Gastrocnemius medialis (tissue), 4 donors: ENCODE measurements at regions of chr14 and their contacts with region 1.

Region 1: GRCh38 chr14:50396631-50397390 is at the start of gene CDKL1:
- DNase-seq: peak; percentile 9 to 27
- ATAC-seq: peak; percentile 74 to 75
- H3K4me3 ChIP-seq: peak within 1 kb of the TSS; percentile 59 to 95 (median 67)
- H3K27ac ChIP-seq: peak within 1 kb of the TSS; percentile 66 to 70 (median 68)
- H3K4me1 ChIP-seq: peaks cover 10 to 13% of the 10 kb centered on the region in 2 donors
- H3K27me3 ChIP-seq: no peaks in the 10 kb centered on the region
- CTCF ChIP-seq: no peak
- POLR2A ChIP-seq: peak in 1 of 2 donors; percentile 13
- total RNA-seq, gene CDKL1: 0.59 to 2.0 (median 1.4) TPM

Region 2: DNA sequence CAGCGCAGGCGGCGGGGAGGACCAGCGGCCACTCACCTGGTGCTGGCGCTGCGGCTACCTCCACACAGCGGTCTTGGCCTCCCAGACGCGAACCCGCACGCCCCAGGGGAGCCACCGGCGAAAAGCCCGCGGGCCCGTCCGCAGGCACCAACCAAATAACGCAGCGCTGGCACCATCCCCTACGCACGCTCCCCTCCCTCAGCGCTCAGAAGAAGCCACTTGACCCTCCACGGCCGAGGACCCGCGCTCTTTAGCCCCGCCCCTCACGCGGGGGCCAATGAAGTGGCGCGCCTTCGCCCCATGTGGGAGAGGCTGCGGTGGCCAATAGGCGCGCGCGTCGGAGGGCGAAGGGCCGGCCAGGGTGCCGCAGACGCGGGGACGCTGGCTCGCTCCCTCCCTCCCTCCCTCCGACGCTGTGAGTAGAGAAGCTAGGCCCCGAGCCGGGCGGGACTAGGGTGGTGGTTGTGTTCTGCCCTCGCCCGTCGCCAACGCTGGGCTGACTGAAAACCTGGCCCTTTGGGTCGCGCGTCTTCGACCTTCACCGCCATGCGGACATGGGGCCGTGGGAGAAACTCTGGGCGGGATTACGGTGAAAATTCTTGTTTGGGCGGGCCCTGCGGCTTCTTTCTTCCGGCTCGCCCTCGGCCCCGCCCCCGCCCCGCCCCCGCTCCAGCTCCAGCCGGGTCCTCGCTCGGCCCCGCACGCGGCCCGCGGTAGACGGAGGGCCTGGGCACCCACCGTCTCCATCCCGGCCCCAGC is 84.7 kb before region 1 on chr14 and contains the starts of genes DMAC2L and L2HGDH:
- in situ Hi-C with region 1: no loop called
- intact Hi-C with region 1: loop called (anchors 2 kb)
- DNase-seq: peak; percentile 85 to 92
- ATAC-seq: peak; percentile 91 to 95
- H3K4me3 ChIP-seq: peak within 1 kb of the TSS; percentile 61 to 92 (median 86)
- H3K27ac ChIP-seq: peak within 1 kb of the TSS; percentile 94 to 98 (median 96)
- H3K4me1 ChIP-seq: peaks cover 18% of the 10 kb centered on the region in 2 donors
- H3K27me3 ChIP-seq: no peaks in the 10 kb centered on the region
- CTCF ChIP-seq: peak in 3 of 5 experiments; percentile 10 to 78 (median 34)
- POLR2A ChIP-seq: peak; percentile 79 to 83
- total RNA-seq, gene DMAC2L: 18.6 to 42.2 (median 24.6) TPM
- total RNA-seq, gene L2HGDH: 8.6 to 13.4 (median 10.9) TPM

Region 3: DNA sequence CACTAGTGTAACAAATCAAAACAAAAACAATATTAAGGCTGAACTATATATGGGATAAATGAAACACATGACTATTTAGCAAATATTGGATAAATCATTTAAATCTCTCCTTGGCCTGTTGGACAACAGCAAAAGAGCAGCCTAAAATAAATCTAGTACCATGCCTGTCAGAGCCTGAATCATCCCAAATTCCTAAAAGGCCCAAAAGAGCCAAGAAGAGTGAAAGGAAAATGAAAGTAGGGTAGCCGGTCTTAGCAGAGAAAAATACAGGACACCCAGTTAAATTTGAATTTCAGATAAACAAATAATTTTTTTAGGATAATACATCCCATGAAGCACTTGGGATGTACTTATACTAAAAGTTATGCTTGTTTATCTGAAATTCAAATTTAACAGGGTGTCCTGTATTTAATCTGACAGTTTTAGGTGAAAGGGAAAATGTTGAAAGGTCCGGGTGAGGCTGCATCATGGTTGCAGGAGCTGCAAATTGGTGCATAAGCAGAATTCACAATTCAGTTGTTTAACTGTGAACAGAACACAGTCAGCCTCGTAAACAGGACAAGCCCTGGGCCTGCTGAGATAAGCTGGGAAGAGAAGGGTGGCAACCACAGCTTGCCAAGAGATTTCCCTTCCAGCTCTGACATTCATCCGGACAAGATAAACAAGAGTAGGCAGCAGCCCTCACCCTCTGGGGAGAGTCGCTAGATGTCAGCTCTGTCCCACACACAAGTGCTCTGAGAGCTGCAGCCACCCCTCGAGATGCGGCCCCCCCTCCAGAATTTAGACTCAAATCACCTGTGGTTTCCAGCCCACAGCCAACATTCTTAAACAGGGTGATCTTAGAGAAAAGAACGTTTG is 54.4 kb before region 1 on chr14:
- in situ Hi-C with region 1: no loop called
- intact Hi-C with region 1: loop called (anchors 2 kb)
- DNase-seq: peak; percentile 21 to 47
- ATAC-seq: peak; percentile 70 to 78
- H3K4me3 ChIP-seq: peak overlapping the region; percentile 0 to 36 (median 16)
- H3K27ac ChIP-seq: peak overlapping the region; percentile 2 to 63 (median 30)
- H3K4me1 ChIP-seq: peaks cover 8 to 25% of the 10 kb centered on the region in 2 donors
- H3K27me3 ChIP-seq: no peaks in the 10 kb centered on the region
- CTCF ChIP-seq: peak in 2 of 5 experiments; percentile 23 to 38
- POLR2A ChIP-seq: no peak

Region 4: DNA sequence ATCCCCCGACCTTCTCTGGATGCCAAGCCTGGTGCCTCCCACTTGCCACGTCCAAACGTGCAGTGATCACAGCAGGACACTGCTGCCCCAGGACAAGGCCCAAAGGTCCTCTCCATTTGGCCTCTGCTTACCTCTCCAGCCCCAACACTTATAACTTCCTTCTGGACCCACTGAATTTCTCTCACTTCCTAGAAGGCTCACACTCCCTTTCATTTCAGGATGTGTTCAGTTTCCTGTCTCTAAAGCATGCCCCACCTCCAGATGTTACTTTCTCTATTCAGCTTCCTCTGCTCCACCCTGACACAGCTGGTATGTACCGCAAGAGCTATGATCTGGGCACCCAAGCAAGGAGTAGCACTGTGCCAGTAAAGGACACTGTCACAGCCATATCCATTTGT is 33.1 kb before region 1 on chr14:
- in situ Hi-C with region 1: no loop called
- intact Hi-C with region 1: no loop called
- DNase-seq: peak in 1 of 2 donors; percentile 25
- ATAC-seq: peak; percentile 45 to 49
- H3K4me3 ChIP-seq: peak overlapping the region in 2 of 4 donors; percentile 5 to 15
- H3K27ac ChIP-seq: peak overlapping the region in 3 of 4 donors; percentile 12 to 61 (median 43)
- H3K4me1 ChIP-seq: peaks cover 0 to 9% of the 10 kb centered on the region in 2 donors
- H3K27me3 ChIP-seq: no peaks in the 10 kb centered on the region
- CTCF ChIP-seq: no peak
- POLR2A ChIP-seq: no peak

Region 5: GRCh38 chr14:50447461-50447860 is 50.6 kb after region 1 on chr14:
- in situ Hi-C with region 1: no loop called
- intact Hi-C with region 1: no loop called
- DNase-seq: no peak
- ATAC-seq: no peak
- H3K4me3 ChIP-seq: no peak overlapping the region
- H3K27ac ChIP-seq: no peak overlapping the region
- H3K4me1 ChIP-seq: no peaks in the 10 kb centered on the region
- H3K27me3 ChIP-seq: no peaks in the 10 kb centered on the region
- CTCF ChIP-seq: no peak
- POLR2A ChIP-seq: no peak

Region 6: GRCh38 chr14:50512463-50512862 is 115.7 kb after region 1 on chr14:
- in situ Hi-C with region 1: no loop called
- intact Hi-C with region 1: no loop called
- DNase-seq: no peak
- ATAC-seq: no peak
- H3K4me3 ChIP-seq: no peak overlapping the region
- H3K27ac ChIP-seq: no peak overlapping the region
- H3K4me1 ChIP-seq: no peaks in the 10 kb centered on the region
- H3K27me3 ChIP-seq: no peaks in the 10 kb centered on the region
- CTCF ChIP-seq: no peak
- POLR2A ChIP-seq: no peak